ENCODE measurements at regions of chr3 and their contacts with region 1.

Region 1: DNA sequence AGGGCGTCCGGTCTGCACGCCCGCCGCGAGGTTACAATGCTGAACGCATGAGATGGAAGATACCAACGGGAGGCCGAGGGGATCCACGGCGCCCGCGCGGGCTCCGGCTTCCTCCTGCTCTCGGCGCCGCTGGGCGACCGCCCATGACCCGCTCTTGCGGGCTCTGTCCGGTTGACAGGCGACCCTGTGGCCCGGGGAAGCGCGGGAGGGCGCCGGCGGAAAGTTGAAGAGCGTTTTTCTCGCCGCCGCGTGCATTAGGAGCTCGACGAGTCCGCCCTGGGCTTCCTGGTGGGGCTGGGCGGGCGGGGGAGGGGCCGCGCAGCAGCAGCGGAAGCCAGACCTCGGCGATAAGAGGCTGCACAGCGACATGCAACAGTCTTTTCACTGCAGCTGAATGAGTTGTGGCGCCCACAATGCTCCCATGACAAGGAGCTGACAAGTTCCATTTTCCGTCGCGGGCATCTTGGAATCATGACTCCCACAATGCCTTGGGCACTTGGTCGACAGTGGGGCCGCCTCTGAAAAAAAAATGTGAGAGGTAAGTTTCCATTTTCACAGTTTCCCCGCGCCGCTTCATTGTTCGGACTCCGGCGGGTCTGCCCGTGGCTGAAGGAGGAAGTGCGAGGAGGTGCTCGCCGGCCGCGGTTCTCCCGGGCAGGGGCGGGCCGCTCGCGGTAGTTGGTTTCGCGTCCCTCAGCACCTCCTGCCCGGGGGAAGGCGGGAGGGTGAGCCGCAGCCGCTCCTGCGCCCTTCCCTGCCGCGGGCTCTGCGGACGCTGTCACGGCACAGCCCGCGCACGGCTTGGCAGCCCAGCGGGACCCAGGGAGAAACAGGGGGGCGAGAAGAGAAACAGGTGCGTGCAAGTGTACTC is at the start of gene MBNL1:
- DNase-seq: peak; percentile 79
- ATAC-seq: peak; percentile 60
- H3K4me3 ChIP-seq: peak within 1 kb of the TSS; percentile 81
- H3K27ac ChIP-seq: peak within 1 kb of the TSS; percentile 94
- H3K4me1 ChIP-seq: peaks cover 48% of the 10 kb centered on the region
- H3K27me3 ChIP-seq: no peaks in the 10 kb centered on the region
- CTCF ChIP-seq: no peak
- total RNA-seq, gene MBNL1: 150 and 161 TPM in 2 replicates

Region 2: GRCh38 chr3:152026033-152026556 is 242.7 kb before region 1 on chr3:
- CTCF ChIA-PET with region 1: interaction called, 18 read pairs
- POLR2A ChIA-PET with region 1: interaction called, 33 read pairs
- intact Hi-C with region 1: loop called (anchors 1 kb)
- DNase-seq: peak; percentile 96
- ATAC-seq: peak; percentile 49
- H3K4me3 ChIP-seq: peak overlapping the region; percentile 38; the same call in 1 of the 2 replicates
- H3K27ac ChIP-seq: peak overlapping the region; percentile 74
- H3K4me1 ChIP-seq: peaks cover 39% of the 10 kb centered on the region
- H3K27me3 ChIP-seq: no peaks in the 10 kb centered on the region
- CTCF ChIP-seq: peak; percentile 67

Region 3: GRCh38 chr3:152159328-152159727 is 109.5 kb before region 1 on chr3:
- CTCF ChIA-PET with region 1: interaction called, 4 read pairs
- POLR2A ChIA-PET with region 1: interaction called, 18 read pairs
- intact Hi-C with region 1: loop called (anchors 2 kb)
- DNase-seq: peak; percentile 93
- ATAC-seq: peak; percentile 99
- H3K4me3 ChIP-seq: peak overlapping the region; percentile 7; the same call in 1 of the 2 replicates
- H3K27ac ChIP-seq: peak overlapping the region; percentile 29
- H3K4me1 ChIP-seq: peaks cover 23% of the 10 kb centered on the region
- H3K27me3 ChIP-seq: no peaks in the 10 kb centered on the region
- CTCF ChIP-seq: no peak

Region 4: GRCh38 chr3:152241142-152242017 is 27.4 kb before region 1 on chr3:
- CTCF ChIA-PET with region 1: no interaction called
- POLR2A ChIA-PET with region 1: no interaction called
- intact Hi-C with region 1: no loop called
- DNase-seq: peak; percentile 42
- ATAC-seq: no peak
- H3K4me3 ChIP-seq: no peak overlapping the region
- H3K27ac ChIP-seq: no peak overlapping the region
- H3K4me1 ChIP-seq: peaks cover 13% of the 10 kb centered on the region; the same call in 1 of the 2 replicates
- H3K27me3 ChIP-seq: no peaks in the 10 kb centered on the region
- CTCF ChIP-seq: no peak

Region 5: DNA sequence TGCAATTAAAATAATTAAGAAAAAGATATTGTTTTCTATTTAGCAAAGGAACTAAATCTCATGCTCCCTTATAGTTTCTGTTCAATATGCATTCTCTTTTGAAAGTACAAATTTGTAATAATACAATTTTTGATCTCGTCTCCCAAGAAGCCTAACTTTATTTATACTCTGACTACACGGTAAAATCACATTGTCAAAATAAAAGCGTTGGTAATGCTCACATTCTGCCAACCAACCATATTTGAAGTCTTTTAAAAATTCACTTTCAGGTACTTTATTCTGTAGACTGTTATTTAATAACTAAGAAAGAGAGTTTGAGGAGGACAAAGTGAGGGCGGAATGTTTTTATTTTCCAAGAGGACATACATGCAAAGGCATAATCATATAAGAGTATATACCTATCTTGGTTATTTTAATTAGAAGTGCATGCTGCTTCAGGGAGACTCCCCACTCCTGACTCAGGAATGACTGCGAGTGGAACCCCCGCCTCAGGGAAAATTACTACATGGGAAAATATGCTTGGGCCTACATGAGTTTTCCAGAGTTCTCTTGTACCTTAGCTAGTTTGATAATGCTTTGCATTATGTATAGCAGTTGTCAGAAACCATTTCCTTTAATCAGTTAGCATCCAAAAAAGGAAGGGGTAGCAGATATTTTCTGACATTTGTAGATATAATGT is 19.2 kb after region 1 on chr3:
- CTCF ChIA-PET with region 1: no interaction called
- POLR2A ChIA-PET with region 1: no interaction called
- intact Hi-C with region 1: loop called (anchors 2 kb)
- DNase-seq: peak; percentile 44
- ATAC-seq: peak; percentile 27; the same call in 1 of the 2 replicates
- H3K4me3 ChIP-seq: no peak overlapping the region
- H3K27ac ChIP-seq: no peak overlapping the region; the same call in 1 of the 2 replicates
- H3K4me1 ChIP-seq: peaks cover 28% of the 10 kb centered on the region
- H3K27me3 ChIP-seq: no peaks in the 10 kb centered on the region
- CTCF ChIP-seq: no peak

Region 6: DNA sequence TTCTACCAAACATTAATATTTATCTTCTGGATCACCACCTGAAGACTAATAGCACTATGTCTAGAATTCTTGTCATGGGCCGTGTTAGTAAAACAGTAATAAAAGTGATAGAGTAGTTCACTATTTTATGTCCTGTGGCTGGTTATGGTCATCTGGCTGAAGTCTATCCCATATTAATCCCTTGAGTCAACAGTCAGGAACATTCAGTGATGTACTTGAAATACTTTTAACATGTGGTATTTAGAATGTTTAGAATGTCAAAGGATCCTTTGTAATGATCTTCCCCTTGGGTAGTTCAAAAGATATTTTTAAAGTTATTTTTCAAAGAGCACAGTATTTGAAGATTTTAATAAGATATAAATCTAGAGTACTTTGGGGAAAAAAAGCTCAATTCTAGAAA is 117.0 kb after region 1 on chr3:
- CTCF ChIA-PET with region 1: no interaction called
- POLR2A ChIA-PET with region 1: no interaction called
- intact Hi-C with region 1: loop called (anchors 5 kb)
- DNase-seq: peak; percentile 35
- ATAC-seq: no peak
- H3K4me3 ChIP-seq: no peak overlapping the region
- H3K27ac ChIP-seq: no peak overlapping the region
- H3K4me1 ChIP-seq: peaks cover 38% of the 10 kb centered on the region
- H3K27me3 ChIP-seq: no peaks in the 10 kb centered on the region
- CTCF ChIP-seq: no peak

Region 7: GRCh38 chr3:152556731-152557254 is 288.0 kb after region 1 on chr3:
- CTCF ChIA-PET with region 1: no interaction called
- POLR2A ChIA-PET with region 1: no interaction called
- intact Hi-C with region 1: no loop called
- DNase-seq: peak; percentile 10
- ATAC-seq: no peak
- H3K4me3 ChIP-seq: no peak overlapping the region
- H3K27ac ChIP-seq: no peak overlapping the region
- H3K4me1 ChIP-seq: no peaks in the 10 kb centered on the region
- H3K27me3 ChIP-seq: peaks cover 9% of the 10 kb centered on the region; the same call in 1 of the 2 replicates
- CTCF ChIP-seq: no peak